Endothelial cell of umbilical vein (primary cell): ENCODE measurements at regions of chr5 and their contacts with region 1.

Region 1: DNA sequence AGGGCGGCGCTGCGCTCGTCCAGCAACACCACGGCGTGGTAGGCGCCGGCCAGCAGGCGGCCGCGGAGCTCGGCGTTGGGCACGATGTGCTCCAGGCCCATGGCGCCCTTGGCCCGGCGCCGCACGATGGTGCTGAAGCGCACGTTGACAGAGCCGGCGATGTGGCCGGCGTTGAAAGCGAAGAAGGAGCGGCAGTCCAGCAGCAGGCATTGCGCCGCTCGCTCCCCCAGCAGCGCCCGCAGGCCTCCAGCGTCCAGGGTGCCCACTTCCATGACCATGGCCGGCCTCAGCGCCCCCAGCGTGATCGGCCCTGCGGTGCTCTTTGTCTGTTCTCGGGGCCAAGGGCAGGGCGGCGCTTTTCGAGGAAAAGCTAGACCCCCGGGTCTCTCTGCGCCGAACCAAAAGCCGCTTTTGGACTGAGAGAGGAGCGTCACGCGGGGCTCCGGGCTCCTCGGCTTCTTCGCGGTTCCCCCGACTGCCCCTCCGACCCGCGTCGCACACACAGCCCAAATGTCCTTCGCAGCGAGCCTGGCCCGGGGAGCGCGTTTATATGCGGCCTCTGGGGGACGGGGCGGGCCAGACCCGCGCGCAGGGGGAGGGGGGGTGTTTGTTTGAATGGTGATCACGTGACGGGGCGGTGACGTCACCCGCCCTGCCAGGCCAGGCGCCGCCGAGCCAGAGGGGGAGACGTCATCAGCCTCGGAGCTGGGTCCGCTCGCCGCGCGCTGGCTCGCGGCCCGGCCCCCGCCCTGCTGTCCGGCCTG is at the start of gene DUSP1:
- DNase-seq: peak; percentile 98
- H3K4me3 ChIP-seq: peak within 1 kb of the TSS; percentile 60 to 96 (median 88)
- H3K27ac ChIP-seq: peak within 1 kb of the TSS; percentile 99
- H3K4me1 ChIP-seq: peaks cover 47% of the 10 kb centered on the region
- H3K27me3 ChIP-seq: no peaks in the 10 kb centered on the region
- CTCF ChIP-seq: peak; percentile 54 to 61
- POLR2A ChIP-seq: peak; percentile 99
- total RNA-seq, gene DUSP1: 36.1 and 46.5 TPM in 2 replicates

Region 2: DNA sequence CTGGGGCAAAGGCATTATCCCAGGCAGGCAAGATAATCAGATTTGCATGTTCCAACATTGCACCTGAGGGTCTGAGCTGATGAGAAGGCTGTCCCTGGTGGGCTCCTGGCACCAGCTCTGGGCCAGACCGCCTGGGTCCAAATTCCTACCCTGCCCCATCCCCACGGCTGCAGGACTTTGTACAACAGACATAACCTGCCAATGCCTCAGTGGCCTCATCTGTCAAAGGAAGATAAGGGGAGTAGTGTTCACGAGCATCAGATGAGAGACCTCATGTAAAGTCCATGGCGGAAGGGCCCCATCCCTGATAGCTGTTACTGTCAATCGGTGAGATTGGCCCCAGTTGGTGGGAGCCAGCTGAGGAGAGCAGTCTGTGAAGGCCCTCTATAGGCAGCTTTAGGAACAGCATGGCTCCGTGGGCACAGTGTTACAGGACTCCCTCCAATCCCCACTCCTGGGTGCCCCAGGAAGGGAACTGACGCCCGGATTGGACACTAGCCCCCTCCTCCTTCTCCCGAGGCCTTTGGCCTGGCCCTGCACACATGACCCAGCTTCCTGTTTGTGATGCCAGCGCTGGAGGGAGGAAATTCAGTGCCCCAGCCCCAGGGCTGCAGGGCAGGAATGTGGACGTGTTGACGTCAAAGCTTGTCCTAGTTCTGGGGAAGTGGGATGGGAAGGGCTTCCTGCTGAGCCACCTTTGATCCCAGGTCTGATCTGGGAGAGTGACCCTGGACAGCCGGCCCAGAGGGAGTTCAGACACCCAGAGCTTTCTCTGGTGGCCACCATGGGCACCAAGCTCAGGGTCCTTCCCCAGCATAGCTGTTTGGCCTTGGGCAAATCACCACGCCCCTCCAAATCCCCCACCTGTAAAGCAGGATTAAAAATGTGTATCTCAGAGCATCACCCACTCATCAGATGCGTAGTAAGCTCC is 56.1 kb before region 1 on chr5:
- CTCF ChIA-PET with region 1: interaction called, 87 read pairs
- POLR2A ChIA-PET with region 1: interaction called, 7 read pairs
- dilution Hi-C with region 1: no loop called
- intact Hi-C with region 1: loop called (anchors 1 kb)
- DNase-seq: peak; percentile 74
- H3K4me3 ChIP-seq: no peak overlapping the region
- H3K27ac ChIP-seq: peak overlapping the region; percentile 81
- H3K4me1 ChIP-seq: peaks cover 20% of the 10 kb centered on the region
- H3K27me3 ChIP-seq: no peaks in the 10 kb centered on the region
- CTCF ChIP-seq: peak; percentile 80 to 90
- POLR2A ChIP-seq: no peak

Region 3: GRCh38 chr5:172795318-172795977 is 24.6 kb after region 1 on chr5:
- CTCF ChIA-PET with region 1: interaction called, 44 read pairs
- POLR2A ChIA-PET with region 1: interaction called, 15 read pairs
- dilution Hi-C with region 1: no loop called
- intact Hi-C with region 1: loop called (anchors 1 kb)
- DNase-seq: peak; percentile 96
- H3K4me3 ChIP-seq: no peak overlapping the region
- H3K27ac ChIP-seq: peak overlapping the region; percentile 76
- H3K4me1 ChIP-seq: peaks cover 48% of the 10 kb centered on the region
- H3K27me3 ChIP-seq: no peaks in the 10 kb centered on the region
- CTCF ChIP-seq: no peak
- POLR2A ChIP-seq: no peak

Region 4: GRCh38 chr5:172860520-172861443 is 89.9 kb after region 1 on chr5:
- CTCF ChIA-PET with region 1: interaction called, 37 read pairs
- POLR2A ChIA-PET with region 1: interaction called, 60 read pairs
- dilution Hi-C with region 1: no loop called
- intact Hi-C with region 1: loop called (anchors 1 kb)
- DNase-seq: peak; percentile 90
- H3K4me3 ChIP-seq: no peak overlapping the region
- H3K27ac ChIP-seq: peak overlapping the region; percentile 90
- H3K4me1 ChIP-seq: peaks cover 53% of the 10 kb centered on the region
- H3K27me3 ChIP-seq: no peaks in the 10 kb centered on the region
- CTCF ChIP-seq: no peak
- POLR2A ChIP-seq: peak; percentile 53

Region 5: DNA sequence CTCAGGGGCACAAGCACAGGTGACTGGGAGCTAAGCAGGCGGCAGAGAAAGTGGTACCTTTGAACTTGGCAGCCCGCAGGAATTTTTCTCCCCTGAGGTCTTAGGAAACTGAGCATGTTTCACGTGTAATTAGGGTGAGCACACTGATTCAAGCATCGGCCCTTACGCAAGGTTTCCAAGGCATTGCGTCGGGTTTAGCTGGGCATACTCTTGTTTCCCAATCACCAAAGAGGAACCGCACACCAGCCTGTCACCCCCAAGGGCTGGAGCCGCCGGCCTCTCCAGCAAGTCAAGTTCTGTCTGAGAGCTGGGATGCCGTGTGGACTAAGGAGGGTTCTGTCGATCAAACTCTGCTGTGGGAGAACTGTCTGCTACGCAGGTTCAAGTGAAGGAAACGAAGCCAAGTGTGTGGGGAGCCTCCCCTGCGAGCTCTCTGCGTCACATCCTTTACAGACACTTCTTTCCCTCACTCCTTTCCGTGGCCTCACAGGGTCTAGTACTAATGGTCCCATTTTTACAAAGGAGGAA is 116.2 kb after region 1 on chr5:
- CTCF ChIA-PET with region 1: interaction called, 6 read pairs
- POLR2A ChIA-PET with region 1: interaction called, 10 read pairs
- dilution Hi-C with region 1: no loop called
- intact Hi-C with region 1: no loop called
- DNase-seq: peak; percentile 81
- H3K4me3 ChIP-seq: no peak overlapping the region
- H3K27ac ChIP-seq: peak overlapping the region; percentile 94
- H3K4me1 ChIP-seq: peaks cover 33% of the 10 kb centered on the region
- H3K27me3 ChIP-seq: no peaks in the 10 kb centered on the region
- CTCF ChIP-seq: no peak
- POLR2A ChIP-seq: no peak

Region 6: GRCh38 chr5:172910828-172911627 is 140.2 kb after region 1 on chr5:
- CTCF ChIA-PET with region 1: interaction called, 12 read pairs
- POLR2A ChIA-PET with region 1: interaction called, 6 read pairs
- dilution Hi-C with region 1: no loop called
- intact Hi-C with region 1: loop called (anchors 1 kb)
- DNase-seq: peak; percentile 90
- H3K4me3 ChIP-seq: no peak overlapping the region
- H3K27ac ChIP-seq: peak overlapping the region; percentile 89
- H3K4me1 ChIP-seq: peaks cover 15% of the 10 kb centered on the region
- H3K27me3 ChIP-seq: no peaks in the 10 kb centered on the region
- CTCF ChIP-seq: peak; percentile 60 to 75
- POLR2A ChIP-seq: peak; percentile 42

Region 7: GRCh38 chr5:172958331-172959046 is 187.6 kb after region 1 on chr5:
- CTCF ChIA-PET with region 1: interaction called, 5 read pairs
- POLR2A ChIA-PET with region 1: interaction called, 3 read pairs
- dilution Hi-C with region 1: no loop called
- intact Hi-C with region 1: loop called (anchors 1 kb)
- DNase-seq: peak; percentile 58
- H3K4me3 ChIP-seq: peak overlapping the region; percentile 59 to 66 (median 63)
- H3K27ac ChIP-seq: peak overlapping the region; percentile 59
- H3K4me1 ChIP-seq: peaks cover 22% of the 10 kb centered on the region
- H3K27me3 ChIP-seq: no peaks in the 10 kb centered on the region
- CTCF ChIP-seq: no peak
- POLR2A ChIP-seq: no peak